Endothelial cell of umbilical vein (primary cell): ENCODE measurements at regions of chr3 and their contacts with region 1.

Region 1: DNA sequence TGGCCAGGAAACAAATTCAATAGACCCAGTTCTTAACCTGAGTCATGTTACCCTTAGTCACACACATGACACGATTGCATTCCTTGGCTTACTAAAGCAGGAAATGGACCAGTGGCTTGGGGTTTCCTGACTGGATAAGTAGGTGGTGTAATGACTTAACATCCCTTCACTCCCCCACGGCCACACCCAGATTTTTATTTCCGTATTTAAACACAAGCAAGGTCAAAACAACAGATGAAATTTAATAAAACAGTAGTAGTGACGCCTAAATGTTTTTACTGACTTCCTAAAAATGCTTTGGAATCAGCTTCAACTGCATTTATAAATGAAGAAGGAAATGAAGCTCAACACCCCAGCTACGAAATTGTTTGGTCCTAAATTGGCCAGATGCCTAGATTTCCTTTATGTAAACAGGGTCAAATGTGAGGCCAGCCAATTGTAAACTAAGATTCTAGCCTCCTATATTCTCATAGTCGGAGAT is 324.3 kb downstream of the CHST2 start:
- DNase-seq: peak; percentile 98
- H3K4me3 ChIP-seq: no peak overlapping the region
- H3K27ac ChIP-seq: peak overlapping the region; percentile 98
- H3K4me1 ChIP-seq: peaks cover 25% of the 10 kb centered on the region
- H3K27me3 ChIP-seq: no peaks in the 10 kb centered on the region
- CTCF ChIP-seq: no peak
- POLR2A ChIP-seq: peak; percentile 62

Region 2: GRCh38 chr3:143001369-143002082 is 442.4 kb before region 1 on chr3 and contains the start of gene U2SURP:
- CTCF ChIA-PET with region 1: no interaction called
- POLR2A ChIA-PET with region 1: no interaction called
- dilution Hi-C with region 1: no loop called
- intact Hi-C with region 1: loop called (anchors 1 kb)
- DNase-seq: peak; percentile 98
- H3K4me3 ChIP-seq: peak within 1 kb of the TSS; percentile 73 to 93 (median 92)
- H3K27ac ChIP-seq: peak within 1 kb of the TSS; percentile 72
- H3K4me1 ChIP-seq: peaks cover 16% of the 10 kb centered on the region
- H3K27me3 ChIP-seq: peaks cover 0 to 2% of the 10 kb centered on the region in 2 experiments
- CTCF ChIP-seq: no peak
- POLR2A ChIP-seq: peak; percentile 84
- total RNA-seq, gene U2SURP: 85.2 and 92.4 TPM in 2 replicates

Region 3: DNA sequence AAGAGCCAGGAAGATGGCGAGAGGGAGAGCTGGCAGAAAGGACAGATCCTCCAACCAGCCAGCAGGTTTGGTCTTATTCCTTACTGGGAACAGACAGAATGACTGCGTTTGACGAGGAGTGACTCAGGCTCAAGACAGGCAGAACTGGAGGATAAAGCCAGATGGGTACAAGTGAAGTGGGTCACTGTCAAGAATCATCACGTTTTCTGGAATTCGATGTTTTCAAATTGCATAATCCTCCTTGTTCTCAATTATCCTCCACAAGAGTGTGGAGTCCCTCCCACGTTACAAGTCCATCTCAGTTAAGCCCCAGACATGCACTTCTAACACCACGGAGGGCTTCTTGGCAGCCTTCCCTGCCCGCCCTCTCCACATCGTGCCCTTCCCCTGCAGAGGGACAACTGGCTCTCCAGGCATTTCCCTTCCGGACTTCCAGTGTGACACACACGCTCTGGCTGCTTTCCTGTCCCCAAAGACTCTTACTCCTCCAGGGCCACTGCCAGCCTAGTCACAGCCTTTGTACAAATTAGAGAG is 141.2 kb before region 1 on chr3:
- CTCF ChIA-PET with region 1: interaction called, 3 read pairs
- POLR2A ChIA-PET with region 1: no interaction called
- dilution Hi-C with region 1: no loop called
- intact Hi-C with region 1: loop called (anchors 2 kb)
- DNase-seq: peak; percentile 90
- H3K4me3 ChIP-seq: no peak overlapping the region
- H3K27ac ChIP-seq: peak overlapping the region; percentile 71
- H3K4me1 ChIP-seq: peaks cover 48% of the 10 kb centered on the region
- H3K27me3 ChIP-seq: no peaks in the 10 kb centered on the region
- CTCF ChIP-seq: no peak
- POLR2A ChIP-seq: peak; percentile 71

Region 4: GRCh38 chr3:143433787-143434378 is 10.0 kb before region 1 on chr3:
- CTCF ChIA-PET with region 1: interaction called, 21 read pairs
- POLR2A ChIA-PET with region 1: no interaction called
- dilution Hi-C with region 1: no loop called
- intact Hi-C with region 1: no loop called
- DNase-seq: no peak
- H3K4me3 ChIP-seq: no peak overlapping the region
- H3K27ac ChIP-seq: no peak overlapping the region
- H3K4me1 ChIP-seq: no peaks in the 10 kb centered on the region
- H3K27me3 ChIP-seq: no peaks in the 10 kb centered on the region
- CTCF ChIP-seq: peak; percentile 35 to 37
- POLR2A ChIP-seq: no peak

Region 5: DNA sequence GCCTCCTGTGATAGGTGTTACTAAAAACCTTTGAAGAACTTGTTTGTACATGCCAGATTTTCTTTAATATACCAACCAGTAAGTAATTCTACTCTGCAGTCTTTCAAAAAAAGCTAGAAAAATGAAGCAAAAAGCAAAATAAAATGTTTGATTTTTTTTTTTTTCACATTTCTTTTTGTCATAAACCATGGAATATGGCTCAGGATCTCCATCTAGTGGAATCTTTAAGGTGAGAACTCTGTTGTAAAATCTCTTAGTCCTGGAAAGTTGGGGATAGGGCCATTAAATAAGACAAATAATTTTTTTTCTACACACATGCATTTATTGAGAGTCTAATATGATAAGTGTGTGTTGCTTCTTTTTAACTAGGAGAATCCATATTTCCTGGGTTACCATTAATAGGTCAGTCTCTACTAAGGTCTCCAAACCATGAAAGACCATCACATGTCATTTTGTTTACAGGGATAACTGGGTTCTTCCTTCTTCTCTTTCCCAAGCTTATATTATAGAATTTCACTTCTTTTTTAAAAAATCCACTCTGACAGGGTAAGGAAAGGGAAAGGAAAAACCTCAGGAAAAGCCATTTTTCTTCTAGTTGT is 319.8 kb after region 1 on chr3:
- CTCF ChIA-PET with region 1: no interaction called
- POLR2A ChIA-PET with region 1: no interaction called
- dilution Hi-C with region 1: no loop called
- intact Hi-C with region 1: loop called (anchors 10 kb)
- DNase-seq: peak; percentile 38
- H3K4me3 ChIP-seq: no peak overlapping the region
- H3K27ac ChIP-seq: no peak overlapping the region
- H3K4me1 ChIP-seq: no peaks in the 10 kb centered on the region
- H3K27me3 ChIP-seq: no peaks in the 10 kb centered on the region
- CTCF ChIP-seq: peak; percentile 18 to 22
- POLR2A ChIP-seq: no peak